B cell (primary cell): ENCODE measurements at regions of chr2 and their contacts with region 1.

Region 1: GRCh38 chr2:107685421-107685986 is 141.2 kb upstream of the RGPD4 start:
- DNase-seq: no peak
- ATAC-seq: no peak
- H3K4me3 ChIP-seq: no peak overlapping the region
- H3K4me3 Mint-ChIP-seq: no peak overlapping the region
- H3K27ac ChIP-seq: no peak overlapping the region
- H3K27ac Mint-ChIP-seq: no peak overlapping the region
- H3K4me1 ChIP-seq: no peaks in the 10 kb centered on the region
- H3K4me1 Mint-ChIP-seq: no peaks in the 10 kb centered on the region
- H3K27me3 ChIP-seq: no peaks in the 10 kb centered on the region
- H3K27me3 Mint-ChIP-seq: no peaks in the 10 kb centered on the region
- CTCF ChIP-seq: no peak

Region 2: DNA sequence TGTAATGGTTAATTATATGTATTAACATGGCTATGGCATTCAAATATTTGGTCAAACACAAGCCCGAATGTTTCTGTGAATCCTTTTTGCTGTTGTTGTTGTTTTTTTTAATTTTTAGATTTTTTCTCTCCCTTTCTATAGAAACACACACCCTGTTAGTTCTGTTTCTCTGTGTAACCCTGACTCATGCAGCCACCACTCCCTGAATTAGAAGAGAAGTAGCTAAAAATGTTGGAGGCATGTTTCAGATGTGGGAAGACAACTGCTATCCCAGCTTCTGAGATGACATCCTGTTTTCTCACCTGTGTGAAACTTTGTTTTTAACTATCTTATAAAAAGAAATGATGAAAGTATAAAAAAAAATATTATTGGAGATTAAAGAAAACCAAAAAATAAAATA is 78.5 kb before region 1 on chr2:
- CTCF ChIA-PET with region 1: interaction called, 10 read pairs
- POLR2A ChIA-PET with region 1: no interaction called
- intact Hi-C with region 1: no loop called
- DNase-seq: no peak
- ATAC-seq: no peak
- H3K4me3 ChIP-seq: no peak overlapping the region
- H3K4me3 Mint-ChIP-seq: no peak overlapping the region
- H3K27ac ChIP-seq: no peak overlapping the region
- H3K27ac Mint-ChIP-seq: no peak overlapping the region
- H3K4me1 ChIP-seq: no peaks in the 10 kb centered on the region
- H3K4me1 Mint-ChIP-seq: no peaks in the 10 kb centered on the region
- H3K27me3 ChIP-seq: no peaks in the 10 kb centered on the region
- H3K27me3 Mint-ChIP-seq: no peaks in the 10 kb centered on the region
- CTCF ChIP-seq: no peak